ENCODE measurements at regions of chr6 and their contacts with region 1.

Region 1: GRCh38 chr6:75526502-75527127 is 33.0 kb upstream of the FILIP1 start:
- DNase-seq: peak in 1 of 2 donors; percentile 15
- ATAC-seq: peak; percentile 79 to 96 (median 91)
- H3K4me3 ChIP-seq: no peak overlapping the region
- H3K27ac ChIP-seq: no peak overlapping the region
- H3K4me1 ChIP-seq: no peaks in the 10 kb centered on the region
- H3K27me3 ChIP-seq: no peaks in the 10 kb centered on the region
- CTCF ChIP-seq: peak; percentile 81

Region 2: GRCh38 chr6:75266716-75267291 is 259.8 kb before region 1 on chr6:
- intact Hi-C with region 1: loop called (anchors 2 to 5 kb)
- DNase-seq: no peak
- ATAC-seq: peak; percentile 50 to 86 (median 79)
- H3K4me3 ChIP-seq: no peak overlapping the region
- H3K27ac ChIP-seq: no peak overlapping the region
- H3K4me1 ChIP-seq: peaks cover 17% of the 10 kb centered on the region
- H3K27me3 ChIP-seq: no peaks in the 10 kb centered on the region
- CTCF ChIP-seq: peak; percentile 87

Region 3: DNA sequence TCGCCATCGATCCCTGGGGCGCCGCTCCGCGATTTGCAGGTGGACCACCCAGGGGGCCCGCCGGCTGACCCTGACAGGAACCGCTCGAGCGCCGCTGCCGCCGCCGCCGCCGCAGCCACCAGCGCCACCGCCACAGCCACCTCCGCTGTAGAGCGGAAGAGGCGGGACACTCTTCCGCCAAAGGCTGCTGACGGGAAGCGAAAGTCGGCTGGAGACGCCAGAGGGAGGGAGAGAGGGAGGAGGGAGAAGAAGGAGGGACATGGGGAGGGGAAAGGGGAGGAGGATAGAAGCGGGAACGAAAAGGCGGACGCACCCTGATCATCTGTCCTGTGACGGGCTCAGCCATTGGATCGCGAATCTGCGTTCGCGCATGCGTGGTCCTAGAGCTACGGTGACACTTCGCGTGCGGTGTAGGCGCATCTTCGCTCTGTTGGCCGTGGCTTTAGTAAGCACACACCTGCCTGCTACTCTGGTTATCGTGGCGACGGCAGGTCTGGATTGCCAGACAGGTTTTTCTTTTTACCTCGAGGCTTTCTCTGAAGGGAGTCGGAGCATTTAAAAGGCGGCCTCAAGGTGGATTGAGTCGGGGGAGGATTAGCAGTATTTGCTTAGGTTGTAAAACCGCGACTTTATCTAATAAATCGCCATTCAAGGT is 241.9 kb before region 1 on chr6 and contains the start of gene TMEM30A:
- intact Hi-C with region 1: loop called in 1 of 2 experiments (anchors 5 kb)
- DNase-seq: peak; percentile 96 to 99
- ATAC-seq: peak; percentile 98 to 100 (median 100)
- H3K4me3 ChIP-seq: peak within 1 kb of the TSS; percentile 94
- H3K27ac ChIP-seq: peak within 1 kb of the TSS; percentile 95
- H3K4me1 ChIP-seq: peaks cover 31% of the 10 kb centered on the region
- H3K27me3 ChIP-seq: no peaks in the 10 kb centered on the region
- CTCF ChIP-seq: no peak
- total RNA-seq, gene TMEM30A: 30.9 to 52.6 (median 41.6) TPM

Region 4: GRCh38 chr6:75296811-75297779 is 229.5 kb before region 1 on chr6:
- intact Hi-C with region 1: loop called (anchors 5 to 10 kb)
- DNase-seq: no peak
- ATAC-seq: peak in 3 of 4 donors; percentile 39 to 65 (median 54)
- H3K4me3 ChIP-seq: no peak overlapping the region
- H3K27ac ChIP-seq: no peak overlapping the region
- H3K4me1 ChIP-seq: peaks cover 18% of the 10 kb centered on the region
- H3K27me3 ChIP-seq: no peaks in the 10 kb centered on the region
- CTCF ChIP-seq: peak; percentile 76

Region 5: DNA sequence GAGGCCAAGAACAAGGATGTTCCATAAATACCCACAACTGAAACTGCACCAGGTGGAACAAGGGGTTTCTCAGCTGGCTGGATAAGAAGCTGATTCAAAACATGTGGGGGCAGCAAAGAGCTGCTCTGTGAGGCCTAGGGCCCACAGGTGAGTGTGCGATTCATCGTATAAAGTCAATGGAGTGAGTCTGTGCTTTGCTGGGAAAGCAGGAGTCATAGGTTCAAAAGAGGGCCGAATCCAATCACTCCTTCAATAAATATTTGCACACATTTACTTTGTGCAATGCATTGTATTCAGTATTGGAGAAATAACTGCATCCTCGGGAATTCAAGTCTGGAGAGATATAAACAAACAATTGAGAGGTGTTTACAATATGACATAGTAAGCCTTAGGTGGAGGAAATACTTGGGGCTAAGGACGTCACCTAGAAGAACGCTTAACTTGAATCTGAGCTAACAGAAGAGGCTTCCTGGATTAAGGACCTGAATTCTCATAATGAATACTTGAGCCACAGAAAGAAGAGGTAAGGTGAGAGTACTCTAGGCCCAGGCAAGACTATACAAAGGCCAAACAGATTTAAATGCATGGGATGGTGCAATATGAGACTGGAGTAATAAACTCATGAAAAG is 158.3 kb before region 1 on chr6:
- intact Hi-C with region 1: loop called in 1 of 2 experiments (anchors 5 kb)
- DNase-seq: no peak
- ATAC-seq: peak; percentile 89 to 92 (median 90)
- H3K4me3 ChIP-seq: no peak overlapping the region
- H3K27ac ChIP-seq: peak overlapping the region; percentile 73
- H3K4me1 ChIP-seq: peaks cover 41% of the 10 kb centered on the region
- H3K27me3 ChIP-seq: no peaks in the 10 kb centered on the region
- CTCF ChIP-seq: peak; percentile 73

Region 6: GRCh38 chr6:75656479-75656878 is 129.9 kb after region 1 on chr6:
- intact Hi-C with region 1: no loop called
- DNase-seq: no peak
- ATAC-seq: no peak
- H3K4me3 ChIP-seq: no peak overlapping the region
- H3K27ac ChIP-seq: no peak overlapping the region
- H3K4me1 ChIP-seq: no peaks in the 10 kb centered on the region
- H3K27me3 ChIP-seq: no peaks in the 10 kb centered on the region
- CTCF ChIP-seq: no peak

Measured in psoas muscle (tissue), 8 donors.